Activated CD4-positive, alpha-beta memory T cell treated with anti-CD3 and anti-CD28 coated beads, Interleukin-2, amount 10 ng/mL, durations not matched to agents 7 days and 5 days (primary cell): ENCODE measurements at regions of chr15 and their contacts with region 1.

Region 1: DNA sequence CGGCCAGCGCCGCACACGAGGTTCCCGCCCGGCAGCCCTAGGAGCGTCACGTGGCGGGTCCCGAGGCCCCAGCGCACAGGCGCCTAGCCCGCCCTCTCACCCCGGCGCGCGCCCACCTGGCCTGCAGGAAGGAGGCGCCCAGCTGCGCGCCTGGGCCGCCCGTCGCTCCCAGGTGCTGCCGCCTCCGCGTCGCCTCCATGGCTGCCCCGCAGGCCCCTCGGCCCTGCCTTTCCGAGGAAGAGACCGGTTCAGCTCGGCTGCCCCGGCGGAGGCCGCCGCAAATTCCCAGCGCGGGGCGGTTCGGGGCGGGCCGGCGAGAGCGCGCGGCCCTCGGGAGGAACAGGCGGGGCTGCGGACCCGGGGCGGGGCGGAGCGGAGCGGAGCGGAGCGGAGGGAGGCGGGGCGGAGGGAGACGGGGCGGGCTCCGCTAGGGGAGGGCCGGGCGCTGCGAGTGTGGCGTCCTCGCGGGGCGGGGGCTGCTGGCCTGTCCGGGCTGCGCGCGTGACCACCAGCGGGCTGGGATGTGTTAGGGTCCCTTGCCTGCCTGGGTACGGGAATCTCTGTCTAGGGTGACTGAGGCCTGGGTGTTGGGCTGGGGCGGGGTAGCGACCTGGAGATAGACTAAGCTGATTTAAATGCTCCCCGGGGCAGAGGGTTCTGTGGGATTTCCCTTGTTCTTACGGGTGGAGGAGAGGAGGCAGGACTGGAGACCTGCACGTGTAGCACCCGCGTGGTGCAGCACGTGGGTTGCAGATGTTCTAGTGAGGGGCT is at the start of gene CLN6:
- DNase-seq: peak; percentile 83
- H3K4me3 Mint-ChIP-seq: peak within 1 kb of the TSS; percentile 93
- H3K27ac Mint-ChIP-seq: peak within 1 kb of the TSS; percentile 74
- H3K4me1 Mint-ChIP-seq: peaks cover 39% of the 10 kb centered on the region
- H3K27me3 Mint-ChIP-seq: no peaks in the 10 kb centered on the region
- total RNA-seq, gene CLN6: 40.0 to 41.3 TPM

Region 2: GRCh38 chr15:68210821-68211655 is 18.5 kb before region 1 on chr15:
- CTCF ChIA-PET with region 1: interaction called, 6 read pairs
- POLR2A ChIA-PET with region 1: interaction called, 17 read pairs
- DNase-seq: peak; percentile 56
- H3K4me3 Mint-ChIP-seq: no peak overlapping the region
- H3K27ac Mint-ChIP-seq: peak overlapping the region; percentile 58
- H3K4me1 Mint-ChIP-seq: peaks cover 35% of the 10 kb centered on the region
- H3K27me3 Mint-ChIP-seq: no peaks in the 10 kb centered on the region

Region 3: GRCh38 chr15:68218847-68219798 is 10.4 kb before region 1 on chr15:
- CTCF ChIA-PET with region 1: no interaction called
- POLR2A ChIA-PET with region 1: interaction called, 10 read pairs
- DNase-seq: no peak
- H3K4me3 Mint-ChIP-seq: no peak overlapping the region
- H3K27ac Mint-ChIP-seq: no peak overlapping the region
- H3K4me1 Mint-ChIP-seq: peaks cover 4% of the 10 kb centered on the region
- H3K27me3 Mint-ChIP-seq: no peaks in the 10 kb centered on the region